Thyroid gland (tissue), 4 donors: ENCODE measurements at regions of chr21 and their contacts with region 1.

Region 1: DNA sequence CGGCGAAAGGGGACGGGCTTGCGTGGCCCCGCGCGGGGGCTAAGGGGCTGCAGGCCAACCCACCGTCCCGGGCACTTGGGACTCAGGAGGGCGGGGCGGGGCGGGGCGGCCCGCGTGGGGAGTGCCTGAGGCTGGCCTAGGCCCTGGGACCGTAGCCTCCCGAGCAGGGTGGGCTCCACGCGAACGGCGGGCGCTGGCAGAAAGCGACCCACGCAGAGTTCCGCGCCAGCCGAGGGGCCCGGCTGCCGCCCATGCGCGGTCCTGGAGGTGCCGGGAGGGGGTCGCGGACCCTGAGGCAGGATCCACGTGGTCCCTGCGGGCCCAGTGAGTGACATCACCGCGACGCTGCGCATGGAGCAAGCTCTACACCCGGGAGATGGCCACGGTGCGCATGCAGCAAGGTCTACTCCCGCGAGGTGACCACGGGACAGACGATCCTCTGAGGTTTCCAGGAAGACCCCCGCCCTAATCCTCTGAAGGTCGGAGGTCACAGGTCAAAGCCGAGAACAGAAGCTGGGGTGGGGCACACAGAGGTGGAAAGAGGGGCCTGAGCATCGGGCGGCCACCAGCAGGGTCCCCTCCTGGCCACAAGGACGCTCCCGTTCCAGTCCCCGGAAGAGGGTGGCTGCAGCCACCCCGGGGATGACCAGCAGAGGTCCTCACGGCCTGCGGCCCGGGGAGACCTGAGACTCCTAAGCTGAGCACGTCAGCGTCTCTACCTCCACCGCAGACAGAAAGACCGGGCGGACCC is 13.5 kb upstream of the SLC19A1 start:
- DNase-seq: peak; percentile 76 to 91
- H3K4me3 ChIP-seq: peak overlapping the region in 2 of 3 donors; percentile 10 to 48
- H3K27ac ChIP-seq: peak overlapping the region; percentile 74 to 96 (median 77)
- H3K4me1 ChIP-seq: peaks cover 0 to 20% of the 10 kb centered on the region in 2 donors
- H3K27me3 ChIP-seq: no peaks in the 10 kb centered on the region
- CTCF ChIP-seq: peak; percentile 49 to 96 (median 88)
- POLR2A ChIP-seq: peak; percentile 36 to 42

Region 2: GRCh38 chr21:45386721-45387371 is 168.9 kb before region 1 on chr21:
- intact Hi-C with region 1: no loop called
- DNase-seq: no peak
- H3K4me3 ChIP-seq: no peak overlapping the region
- H3K27ac ChIP-seq: peak overlapping the region in 2 of 3 donors; percentile 38 to 55
- H3K4me1 ChIP-seq: peaks cover 0 to 32% of the 10 kb centered on the region in 2 donors
- H3K27me3 ChIP-seq: no peaks in the 10 kb centered on the region
- CTCF ChIP-seq: no peak
- POLR2A ChIP-seq: no peak

Region 3: GRCh38 chr21:45596704-45597318 is 41.1 kb after region 1 on chr21:
- intact Hi-C with region 1: loop called (anchors 2 kb)
- DNase-seq: peak; percentile 77 to 84
- H3K4me3 ChIP-seq: no peak overlapping the region
- H3K27ac ChIP-seq: no peak overlapping the region
- H3K4me1 ChIP-seq: peaks cover 0 to 7% of the 10 kb centered on the region in 2 donors
- H3K27me3 ChIP-seq: no peaks in the 10 kb centered on the region
- CTCF ChIP-seq: peak; percentile 56 to 95 (median 82)
- POLR2A ChIP-seq: no peak